ENCODE measurements at regions of chr12 and their contacts with region 1.

Region 1: DNA sequence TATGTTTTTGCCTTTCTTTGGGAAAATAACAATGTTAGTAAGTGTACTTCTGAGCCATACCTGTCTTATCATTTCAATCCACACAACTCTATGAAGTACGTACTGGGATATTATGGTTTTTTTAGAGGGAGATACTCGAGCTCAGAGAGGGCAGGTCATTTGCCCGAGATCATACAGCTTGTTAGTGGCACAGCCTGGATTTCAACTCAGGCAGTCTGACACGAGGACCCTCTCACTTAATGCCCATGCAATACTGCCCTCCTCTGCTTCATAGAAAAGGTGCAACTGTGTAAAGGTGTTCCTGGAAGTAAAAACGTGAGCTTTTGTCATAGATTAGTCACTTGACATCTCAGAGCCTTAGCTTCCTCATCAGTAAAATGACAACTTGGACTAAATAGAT is 128.0 kb downstream of the NDUFA12 start:
- DNase-seq: peak; percentile 86
- ATAC-seq: peak; percentile 55
- H3K4me3 ChIP-seq: peak overlapping the region; percentile 91; the same call in 1 of the 2 replicates
- H3K27ac ChIP-seq: no peak overlapping the region
- H3K4me1 ChIP-seq: peaks cover 9% of the 10 kb centered on the region
- H3K27me3 ChIP-seq: no peaks in the 10 kb centered on the region
- CTCF ChIP-seq: peak; percentile 57 to 83 (median 68); a peak in 4 of 6 replicates
- EP300 ChIP-seq: no peak
- POLR2A ChIP-seq: no peak
- RAD21 ChIP-seq: peak; percentile 98

Region 2: DNA sequence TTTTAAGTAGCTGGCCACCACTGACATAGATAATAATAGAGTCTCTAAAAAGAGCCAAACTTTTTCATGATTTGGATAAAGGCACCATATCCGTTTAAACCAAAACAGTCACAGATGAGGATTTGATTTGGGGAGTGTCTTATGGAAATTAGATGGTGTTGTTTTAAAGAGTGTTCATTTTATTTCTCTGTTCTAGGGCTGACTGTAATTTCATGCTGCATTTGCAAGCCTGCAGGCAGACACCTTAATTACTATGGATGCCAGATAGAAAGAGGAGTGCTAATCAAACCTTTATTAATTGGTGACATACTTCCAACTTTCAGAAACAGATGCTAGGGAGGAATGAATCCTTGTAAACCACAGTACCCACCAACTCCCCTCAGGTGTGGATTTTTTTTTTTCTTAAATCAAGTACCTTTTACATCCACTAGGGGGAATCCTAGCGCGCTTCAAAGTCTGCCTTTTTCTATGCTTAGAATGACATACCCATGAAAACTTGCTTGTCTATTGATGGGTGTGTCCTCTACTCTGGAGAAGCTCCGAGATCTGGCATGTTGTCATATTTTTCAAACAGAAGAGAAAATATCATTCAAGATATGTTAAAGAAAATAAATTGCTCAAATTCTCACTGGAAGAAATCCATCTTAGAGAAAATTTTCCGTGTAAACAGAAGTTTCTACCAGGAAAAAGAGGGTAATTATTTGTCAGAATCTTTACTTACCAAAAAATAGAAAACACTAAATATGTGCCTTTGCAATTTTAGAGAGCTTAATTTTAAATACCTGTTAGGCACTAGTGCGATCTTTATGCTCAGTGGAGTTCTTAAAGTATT is 741.3 kb before region 1 on chr12:
- CTCF ChIA-PET with region 1: interaction called, 18 read pairs
- POLR2A ChIA-PET with region 1: no interaction called
- RAD21 ChIA-PET with region 1: interaction called, 12 read pairs
- SMC1A ChIA-PET with region 1: interaction called, 5 read pairs
- in situ Hi-C with region 1: no loop called
- intact Hi-C with region 1: no loop called
- DNase-seq: no peak
- ATAC-seq: peak; percentile 97
- H3K4me3 ChIP-seq: no peak overlapping the region
- H3K27ac ChIP-seq: no peak overlapping the region
- H3K4me1 ChIP-seq: no peaks in the 10 kb centered on the region; the same call in 1 of the 2 replicates
- H3K27me3 ChIP-seq: no peaks in the 10 kb centered on the region
- CTCF ChIP-seq: peak; percentile 66 to 73 (median 70)
- EP300 ChIP-seq: no peak
- POLR2A ChIP-seq: no peak
- RAD21 ChIP-seq: peak; percentile 83

Region 3: GRCh38 chr12:94545935-94546771 is 329.4 kb before region 1 on chr12:
- CTCF ChIA-PET with region 1: interaction called, 43 read pairs
- POLR2A ChIA-PET with region 1: interaction called, 3 read pairs
- RAD21 ChIA-PET with region 1: interaction called, 15 read pairs
- SMC1A ChIA-PET with region 1: interaction called, 62 read pairs
- in situ Hi-C with region 1: loop called (anchors 5 kb)
- intact Hi-C with region 1: loop called (anchors 1 kb)
- DNase-seq: peak; percentile 19
- ATAC-seq: peak; percentile 98
- H3K4me3 ChIP-seq: no peak overlapping the region
- H3K27ac ChIP-seq: no peak overlapping the region
- H3K4me1 ChIP-seq: no peaks in the 10 kb centered on the region
- H3K27me3 ChIP-seq: no peaks in the 10 kb centered on the region
- CTCF ChIP-seq: peak; percentile 68 to 75 (median 71)
- EP300 ChIP-seq: no peak
- POLR2A ChIP-seq: no peak
- RAD21 ChIP-seq: peak; percentile 90

Region 4: DNA sequence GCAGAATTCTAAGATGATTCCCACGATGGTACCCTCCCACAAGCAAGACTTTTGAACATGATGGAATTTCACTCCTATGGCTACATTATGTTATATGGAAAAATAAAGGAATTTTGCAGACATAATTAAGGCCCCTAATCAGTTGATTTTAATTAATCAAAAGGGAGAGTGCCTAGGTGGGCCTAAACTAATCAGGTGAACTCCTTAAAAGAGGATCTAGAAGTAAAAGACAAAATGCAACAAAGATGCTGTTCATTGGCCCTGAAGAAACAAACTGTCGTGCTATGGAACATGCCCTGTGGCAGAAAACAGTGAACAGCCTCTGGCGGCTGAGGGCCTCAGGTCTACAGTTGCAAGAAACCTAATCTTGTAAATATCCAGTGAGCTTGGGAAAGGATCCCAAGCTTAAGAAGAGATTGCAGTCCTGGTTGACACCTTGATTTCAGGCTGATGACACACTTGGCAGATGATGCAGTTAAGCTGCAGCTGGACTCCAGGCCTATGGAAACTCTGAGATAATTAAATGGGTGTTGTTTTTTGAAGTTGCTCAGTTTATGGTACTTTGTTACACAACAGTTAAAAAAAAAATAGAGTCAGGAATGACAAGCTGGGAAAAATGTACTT is 239.0 kb before region 1 on chr12:
- CTCF ChIA-PET with region 1: interaction called, 11 read pairs
- POLR2A ChIA-PET with region 1: interaction called, 3 read pairs
- RAD21 ChIA-PET with region 1: interaction called, 8 read pairs
- SMC1A ChIA-PET with region 1: interaction called, 3 read pairs
- in situ Hi-C with region 1: no loop called
- intact Hi-C with region 1: no loop called
- DNase-seq: no peak
- ATAC-seq: no peak
- H3K4me3 ChIP-seq: no peak overlapping the region
- H3K27ac ChIP-seq: no peak overlapping the region
- H3K4me1 ChIP-seq: peaks cover 18% of the 10 kb centered on the region
- H3K27me3 ChIP-seq: no peaks in the 10 kb centered on the region
- CTCF ChIP-seq: no peak
- EP300 ChIP-seq: no peak
- POLR2A ChIP-seq: no peak
- RAD21 ChIP-seq: no peak

Region 5: GRCh38 chr12:94721173-94721572 is 154.4 kb before region 1 on chr12:
- CTCF ChIA-PET with region 1: interaction called, 16 read pairs
- POLR2A ChIA-PET with region 1: interaction called, 8 read pairs
- RAD21 ChIA-PET with region 1: interaction called, 30 read pairs
- SMC1A ChIA-PET with region 1: interaction called, 37 read pairs
- in situ Hi-C with region 1: no loop called
- intact Hi-C with region 1: no loop called
- DNase-seq: peak; percentile 75
- ATAC-seq: peak; percentile 92
- H3K4me3 ChIP-seq: 0 out of 2 replicates have a peak overlapping the region, but pooled peaks have one; percentile 8
- H3K27ac ChIP-seq: peak overlapping the region; percentile 63
- H3K4me1 ChIP-seq: peaks cover 24% of the 10 kb centered on the region
- H3K27me3 ChIP-seq: no peaks in the 10 kb centered on the region
- CTCF ChIP-seq: no peak
- EP300 ChIP-seq: 0 out of 4 replicates have a peak, but pooled peaks of 1 of the 2 experiments have one; percentile 34
- POLR2A ChIP-seq: no peak
- RAD21 ChIP-seq: no peak

Region 6: GRCh38 chr12:94805749-94806529 is 69.6 kb before region 1 on chr12:
- CTCF ChIA-PET with region 1: interaction called, 20 read pairs
- POLR2A ChIA-PET with region 1: interaction called, 3 read pairs
- RAD21 ChIA-PET with region 1: interaction called, 14 read pairs
- SMC1A ChIA-PET with region 1: interaction called, 6 read pairs
- in situ Hi-C with region 1: no loop called
- intact Hi-C with region 1: no loop called
- DNase-seq: no peak
- ATAC-seq: peak; percentile 80
- H3K4me3 ChIP-seq: no peak overlapping the region
- H3K27ac ChIP-seq: peak overlapping the region; percentile 17
- H3K4me1 ChIP-seq: peaks cover 21% of the 10 kb centered on the region
- H3K27me3 ChIP-seq: no peaks in the 10 kb centered on the region
- CTCF ChIP-seq: no peak
- EP300 ChIP-seq: no peak
- POLR2A ChIP-seq: no peak
- RAD21 ChIP-seq: no peak

Region 7: DNA sequence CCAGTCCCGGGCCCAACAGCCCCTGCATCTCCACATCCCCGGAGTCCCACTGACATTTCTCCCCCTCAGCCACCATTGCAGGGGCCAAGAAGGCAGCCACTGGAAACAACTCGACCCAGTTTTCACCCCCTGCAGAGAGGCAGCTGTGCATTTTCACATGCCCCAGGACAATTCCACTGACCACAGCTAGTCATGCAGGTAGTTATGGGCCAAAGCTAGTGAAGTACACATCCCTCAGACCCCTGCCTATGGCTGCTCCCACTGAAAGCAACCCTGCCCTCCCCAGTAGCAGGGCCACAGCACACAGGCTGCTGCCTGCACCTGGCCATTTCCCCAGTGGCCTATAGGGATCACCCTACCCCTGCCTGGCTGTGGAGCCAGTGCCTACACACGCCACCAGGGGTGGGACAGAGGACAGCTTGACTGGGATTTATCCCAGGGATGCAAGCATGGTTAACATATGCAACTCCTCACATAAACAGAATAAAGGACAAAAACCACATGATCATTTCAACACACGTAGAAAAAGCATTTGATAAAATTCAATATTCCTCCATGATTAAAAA is 26.0 kb before region 1 on chr12:
- CTCF ChIA-PET with region 1: interaction called, 10 read pairs
- POLR2A ChIA-PET with region 1: no interaction called
- RAD21 ChIA-PET with region 1: interaction called, 7 read pairs
- SMC1A ChIA-PET with region 1: interaction called, 15 read pairs
- in situ Hi-C with region 1: no loop called
- intact Hi-C with region 1: no loop called
- DNase-seq: no peak
- ATAC-seq: peak; percentile 48
- H3K4me3 ChIP-seq: no peak overlapping the region
- H3K27ac ChIP-seq: no peak overlapping the region
- H3K4me1 ChIP-seq: peaks cover 7% of the 10 kb centered on the region
- H3K27me3 ChIP-seq: no peaks in the 10 kb centered on the region
- CTCF ChIP-seq: 0 out of 6 replicates have a peak, but pooled peaks of 1 of the 3 experiments have one; percentile 5
- EP300 ChIP-seq: no peak
- POLR2A ChIP-seq: no peak
- RAD21 ChIP-seq: no peak

Region 8: GRCh38 chr12:94930216-94930654 is 54.7 kb after region 1 on chr12:
- CTCF ChIA-PET with region 1: no interaction called
- POLR2A ChIA-PET with region 1: no interaction called
- RAD21 ChIA-PET with region 1: no interaction called
- SMC1A ChIA-PET with region 1: no interaction called
- in situ Hi-C with region 1: no loop called
- intact Hi-C with region 1: no loop called
- DNase-seq: no peak
- ATAC-seq: no peak
- H3K4me3 ChIP-seq: no peak overlapping the region
- H3K27ac ChIP-seq: no peak overlapping the region
- H3K4me1 ChIP-seq: no peaks in the 10 kb centered on the region
- H3K27me3 ChIP-seq: no peaks in the 10 kb centered on the region; a peak in 1 of 4 replicates
- CTCF ChIP-seq: no peak
- EP300 ChIP-seq: no peak
- POLR2A ChIP-seq: no peak
- RAD21 ChIP-seq: no peak

Region 9: DNA sequence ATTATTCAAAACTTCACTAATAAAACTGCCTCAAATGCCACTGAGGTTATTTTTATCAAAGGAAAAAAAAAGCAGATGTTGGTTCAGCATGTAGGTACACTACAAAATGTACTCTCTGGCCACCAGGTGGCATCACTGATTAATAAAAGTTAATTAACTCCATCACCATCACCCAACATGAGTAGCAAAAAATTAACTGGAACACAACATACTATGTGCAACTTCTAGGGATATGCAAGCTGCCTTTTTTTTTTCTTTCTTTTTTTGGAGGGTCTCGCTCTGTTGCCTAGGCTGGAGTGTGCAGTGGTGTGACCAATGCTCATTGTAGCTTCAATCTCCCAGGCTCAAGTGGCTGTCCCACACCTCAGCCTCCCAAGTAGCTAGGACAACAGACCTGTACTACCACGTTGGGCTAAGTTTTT is 241.7 kb after region 1 on chr12:
- CTCF ChIA-PET with region 1: no interaction called
- POLR2A ChIA-PET with region 1: no interaction called
- RAD21 ChIA-PET with region 1: no interaction called
- SMC1A ChIA-PET with region 1: no interaction called
- in situ Hi-C with region 1: no loop called
- intact Hi-C with region 1: no loop called
- DNase-seq: peak; percentile 38
- ATAC-seq: peak; percentile 97
- H3K4me3 ChIP-seq: no peak overlapping the region
- H3K27ac ChIP-seq: no peak overlapping the region
- H3K4me1 ChIP-seq: peaks cover 4% of the 10 kb centered on the region
- H3K27me3 ChIP-seq: no peaks in the 10 kb centered on the region
- CTCF ChIP-seq: peak; percentile 39 to 73 (median 54); a peak in 5 of 6 replicates
- EP300 ChIP-seq: no peak
- POLR2A ChIP-seq: no peak
- RAD21 ChIP-seq: peak; percentile 76

Region 10: DNA sequence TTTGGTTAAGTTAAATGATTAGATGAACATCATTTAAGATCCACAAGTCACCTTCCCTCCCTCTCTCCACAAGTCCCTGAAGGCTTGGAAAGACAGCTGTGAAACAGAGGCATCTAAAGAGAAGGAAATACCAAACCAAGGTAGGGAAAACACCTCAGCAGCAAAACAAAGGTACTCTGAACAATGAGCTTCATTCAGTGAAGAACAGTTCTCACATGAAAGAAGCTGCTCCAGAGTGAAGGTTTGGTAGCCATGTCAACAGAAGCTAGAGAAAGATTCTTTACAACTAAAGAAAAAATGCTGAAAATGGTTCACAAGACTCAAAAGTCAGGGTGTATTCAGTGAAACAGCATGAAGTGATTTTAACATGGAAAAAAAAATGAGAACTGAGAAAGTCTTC is 272.3 kb after region 1 on chr12:
- CTCF ChIA-PET with region 1: no interaction called
- POLR2A ChIA-PET with region 1: no interaction called
- RAD21 ChIA-PET with region 1: no interaction called
- SMC1A ChIA-PET with region 1: no interaction called
- in situ Hi-C with region 1: no loop called
- intact Hi-C with region 1: no loop called
- DNase-seq: no peak
- ATAC-seq: peak; percentile 70
- H3K4me3 ChIP-seq: no peak overlapping the region
- H3K27ac ChIP-seq: no peak overlapping the region
- H3K4me1 ChIP-seq: no peaks in the 10 kb centered on the region
- H3K27me3 ChIP-seq: no peaks in the 10 kb centered on the region
- CTCF ChIP-seq: no peak
- EP300 ChIP-seq: no peak
- POLR2A ChIP-seq: no peak
- RAD21 ChIP-seq: no peak